H1 (cell line): ENCODE measurements at regions of chr14 and their contacts with region 1.

Region 1: DNA sequence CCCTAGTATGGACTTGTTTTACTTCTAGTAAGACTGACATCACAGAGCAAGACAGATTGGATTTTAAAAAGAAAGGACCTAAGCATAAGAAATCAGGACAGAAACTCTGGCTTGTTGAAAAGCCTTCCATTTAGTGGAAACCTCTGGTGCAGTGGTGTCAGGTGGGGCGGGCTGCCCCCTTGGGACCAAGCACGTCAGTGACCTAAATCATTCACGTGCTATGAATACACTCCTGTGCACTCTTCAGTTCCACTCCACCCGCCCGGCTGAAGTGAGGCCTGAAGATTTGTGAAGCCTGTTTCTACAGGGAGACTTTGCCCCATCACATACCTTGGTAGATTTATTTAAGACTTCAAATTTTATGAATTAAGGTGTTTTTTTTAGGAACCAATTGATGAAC is 58.2 kb upstream of the STRN3 start:
- DNase-seq: no peak
- H3K4me3 ChIP-seq: no peak overlapping the region
- H3K27ac ChIP-seq: no peak overlapping the region
- H3K4me1 ChIP-seq: no peaks in the 10 kb centered on the region
- H3K27me3 ChIP-seq: no peaks in the 10 kb centered on the region
- CTCF ChIP-seq: peak; percentile 2 to 44 (median 42); a peak in 3 of 4 replicates
- EP300 ChIP-seq: no peak
- POLR2A ChIP-seq: no peak
- RAD21 ChIP-seq: peak; percentile 41 to 55; a peak in 3 of 4 replicates

Region 2: DNA sequence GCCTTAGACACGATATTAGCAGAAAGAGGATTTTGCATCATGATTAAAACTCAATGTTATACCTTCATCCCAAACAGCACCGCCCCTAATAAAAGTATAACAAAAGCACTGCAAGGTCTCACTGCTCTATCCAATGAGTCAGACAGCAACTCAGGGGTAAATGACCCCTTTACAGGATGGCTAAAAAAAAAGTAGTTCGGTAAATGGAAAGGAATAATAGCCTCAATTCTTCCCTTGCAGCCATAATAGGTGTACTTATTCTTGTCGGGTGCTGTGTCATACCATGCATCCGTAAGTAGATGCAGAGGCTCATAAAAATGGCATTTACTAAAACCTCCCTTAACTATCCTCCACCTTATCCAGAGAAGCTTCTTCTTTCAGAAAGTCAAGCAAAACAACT is 112.8 kb before region 1 on chr14:
- CTCF ChIA-PET with region 1: interaction called, 11 read pairs
- POLR2A ChIA-PET with region 1: no interaction called
- DNase-seq: no peak
- H3K4me3 ChIP-seq: no peak overlapping the region
- H3K27ac ChIP-seq: no peak overlapping the region
- H3K4me1 ChIP-seq: peaks cover 0 to 3% (median 0%) of the 10 kb centered on the region in 4 experiments; a peak in 1 of 7 replicates
- H3K27me3 ChIP-seq: no peaks in the 10 kb centered on the region
- CTCF ChIP-seq: no peak
- EP300 ChIP-seq: no peak
- POLR2A ChIP-seq: no peak
- RAD21 ChIP-seq: no peak

Region 3: DNA sequence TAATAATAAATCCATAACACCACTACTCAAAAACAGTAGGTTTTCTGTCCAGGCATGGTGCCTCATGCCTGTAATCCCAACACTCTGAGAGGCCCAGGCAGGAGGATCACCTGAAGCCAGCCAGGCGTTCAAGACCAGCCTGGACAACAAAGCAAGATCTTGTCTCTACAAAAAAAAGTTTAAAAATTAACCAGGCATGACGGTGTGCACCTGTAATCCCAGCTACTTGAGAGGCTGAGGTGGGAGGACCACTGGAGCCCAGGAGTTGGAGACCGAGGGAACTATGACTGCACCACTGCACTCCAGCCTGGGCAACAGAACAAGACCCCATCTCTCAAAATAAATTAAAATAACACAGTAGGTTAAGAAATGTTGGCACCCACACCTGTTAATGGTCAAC is 103.4 kb before region 1 on chr14:
- CTCF ChIA-PET with region 1: interaction called, 22 read pairs
- POLR2A ChIA-PET with region 1: no interaction called
- DNase-seq: no peak
- H3K4me3 ChIP-seq: no peak overlapping the region
- H3K27ac ChIP-seq: no peak overlapping the region
- H3K4me1 ChIP-seq: no peaks in the 10 kb centered on the region
- H3K27me3 ChIP-seq: no peaks in the 10 kb centered on the region
- CTCF ChIP-seq: no peak
- EP300 ChIP-seq: no peak
- POLR2A ChIP-seq: no peak
- RAD21 ChIP-seq: no peak